ENCODE measurements at regions of chr4 and their contacts with region 1.

Region 1: GRCh38 chr4:150867148-150867547 is 147.9 kb downstream of the LRBA start:
- DNase-seq: no peak
- H3K4me3 ChIP-seq: no peak overlapping the region
- H3K27ac ChIP-seq: no peak overlapping the region
- H3K4me1 ChIP-seq: peaks cover 0 to 4% (median 0%) of the 10 kb centered on the region in 4 donors
- H3K27me3 ChIP-seq: no peaks in the 10 kb centered on the region
- CTCF ChIP-seq: peak; percentile 39 to 70 (median 50)
- EP300 ChIP-seq: no peak
- POLR2A ChIP-seq: no peak

Region 2: GRCh38 chr4:149980941-149981340 is 886.2 kb before region 1 on chr4:
- intact Hi-C with region 1: loop called (anchors 5 kb)
- DNase-seq: peak; percentile 68
- H3K4me3 ChIP-seq: no peak overlapping the region
- H3K27ac ChIP-seq: no peak overlapping the region
- H3K4me1 ChIP-seq: peaks cover 0 to 5% (median 0%) of the 10 kb centered on the region in 4 donors
- H3K27me3 ChIP-seq: no peaks in the 10 kb centered on the region
- CTCF ChIP-seq: peak; percentile 21 to 76 (median 72)
- EP300 ChIP-seq: no peak
- POLR2A ChIP-seq: no peak

Region 3: GRCh38 chr4:150010525-150011126 is 856.5 kb before region 1 on chr4:
- intact Hi-C with region 1: loop called (anchors 5 kb)
- DNase-seq: no peak
- H3K4me3 ChIP-seq: no peak overlapping the region
- H3K27ac ChIP-seq: peak overlapping the region in 2 of 4 donors; percentile 16 to 35
- H3K4me1 ChIP-seq: peaks cover 0 to 32% (median 25%) of the 10 kb centered on the region in 4 donors
- H3K27me3 ChIP-seq: no peaks in the 10 kb centered on the region
- CTCF ChIP-seq: peak; percentile 22 to 66 (median 56)
- EP300 ChIP-seq: no peak
- POLR2A ChIP-seq: no peak

Region 4: GRCh38 chr4:150242820-150243458 is 624.2 kb before region 1 on chr4:
- intact Hi-C with region 1: loop called (anchors 10 kb)
- DNase-seq: no peak
- H3K4me3 ChIP-seq: no peak overlapping the region
- H3K27ac ChIP-seq: peak overlapping the region in 1 of 4 donors; percentile 17
- H3K4me1 ChIP-seq: no peaks in the 10 kb centered on the region
- H3K27me3 ChIP-seq: no peaks in the 10 kb centered on the region
- CTCF ChIP-seq: peak; percentile 55 to 93 (median 79)
- EP300 ChIP-seq: no peak
- POLR2A ChIP-seq: no peak

Region 5: DNA sequence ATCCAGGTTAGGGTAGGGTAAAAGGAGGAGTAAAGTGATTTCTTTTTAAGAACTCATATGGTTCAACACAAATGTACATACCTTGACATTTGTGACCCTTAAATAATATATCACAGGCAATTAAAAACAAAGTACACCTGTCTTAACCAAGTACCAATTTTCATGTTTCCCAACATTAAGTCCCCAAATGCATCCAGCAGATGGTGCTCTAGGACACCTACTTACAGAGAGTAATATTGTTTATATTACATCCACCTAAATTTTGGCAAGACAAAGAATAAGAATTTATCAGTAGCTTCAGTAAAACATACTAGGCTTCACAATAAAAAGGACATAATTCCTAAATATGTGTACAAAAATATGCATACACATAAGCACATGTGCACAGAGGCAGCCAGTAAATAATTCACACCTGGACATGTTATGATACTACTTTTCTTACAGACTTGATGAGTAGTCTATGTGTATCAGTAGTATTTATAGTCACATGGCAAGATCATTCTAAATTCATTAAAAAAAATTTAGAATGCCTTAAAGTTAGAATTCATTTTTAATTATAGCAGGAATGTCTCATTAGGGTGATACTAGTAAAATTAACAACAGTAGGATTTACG is 569.2 kb before region 1 on chr4:
- intact Hi-C with region 1: loop called (anchors 2 kb)
- DNase-seq: peak; percentile 76
- H3K4me3 ChIP-seq: peak overlapping the region in 1 of 4 donors; percentile 41
- H3K27ac ChIP-seq: peak overlapping the region in 3 of 4 donors; percentile 67 to 77 (median 69)
- H3K4me1 ChIP-seq: peaks cover 0 to 46% (median 13%) of the 10 kb centered on the region in 4 donors
- H3K27me3 ChIP-seq: no peaks in the 10 kb centered on the region
- CTCF ChIP-seq: peak in 3 of 4 experiments; percentile 60 to 64 (median 60)
- EP300 ChIP-seq: no peak
- POLR2A ChIP-seq: no peak

Region 6: GRCh38 chr4:150583287-150584110 is 283.6 kb before region 1 on chr4:
- intact Hi-C with region 1: loop called (anchors 5 kb)
- DNase-seq: peak; percentile 85
- H3K4me3 ChIP-seq: peak overlapping the region; percentile 76 to 96 (median 81)
- H3K27ac ChIP-seq: peak overlapping the region in 3 of 4 donors; percentile 90 to 93 (median 92)
- H3K4me1 ChIP-seq: no peaks in the 10 kb centered on the region
- H3K27me3 ChIP-seq: no peaks in the 10 kb centered on the region
- CTCF ChIP-seq: no peak
- EP300 ChIP-seq: no peak
- POLR2A ChIP-seq: no peak

Measured in sigmoid colon (tissue), 7 donors.